Testis (tissue), 5 donors: ENCODE measurements at regions of chr14 and their contacts with region 1.

Region 1: GRCh38 chr14:59254146-59254941 is 65.9 kb downstream of the DAAM1 start:
- DNase-seq: peak; percentile 97
- H3K4me3 ChIP-seq: no peak overlapping the region
- H3K27ac ChIP-seq: peak overlapping the region; percentile 88 to 92
- H3K4me1 ChIP-seq: peaks cover 51% of the 10 kb centered on the region
- H3K27me3 ChIP-seq: no peaks in the 10 kb centered on the region
- CTCF ChIP-seq: no peak
- POLR2A ChIP-seq: no peak

Region 2: GRCh38 chr14:59215325-59216181 is 38.8 kb before region 1 on chr14:
- intact Hi-C with region 1: loop called (anchors 5 kb)
- DNase-seq: peak; percentile 81
- H3K4me3 ChIP-seq: no peak overlapping the region
- H3K27ac ChIP-seq: no peak overlapping the region
- H3K4me1 ChIP-seq: peaks cover 26% of the 10 kb centered on the region
- H3K27me3 ChIP-seq: no peaks in the 10 kb centered on the region
- CTCF ChIP-seq: no peak
- POLR2A ChIP-seq: no peak

Region 3: DNA sequence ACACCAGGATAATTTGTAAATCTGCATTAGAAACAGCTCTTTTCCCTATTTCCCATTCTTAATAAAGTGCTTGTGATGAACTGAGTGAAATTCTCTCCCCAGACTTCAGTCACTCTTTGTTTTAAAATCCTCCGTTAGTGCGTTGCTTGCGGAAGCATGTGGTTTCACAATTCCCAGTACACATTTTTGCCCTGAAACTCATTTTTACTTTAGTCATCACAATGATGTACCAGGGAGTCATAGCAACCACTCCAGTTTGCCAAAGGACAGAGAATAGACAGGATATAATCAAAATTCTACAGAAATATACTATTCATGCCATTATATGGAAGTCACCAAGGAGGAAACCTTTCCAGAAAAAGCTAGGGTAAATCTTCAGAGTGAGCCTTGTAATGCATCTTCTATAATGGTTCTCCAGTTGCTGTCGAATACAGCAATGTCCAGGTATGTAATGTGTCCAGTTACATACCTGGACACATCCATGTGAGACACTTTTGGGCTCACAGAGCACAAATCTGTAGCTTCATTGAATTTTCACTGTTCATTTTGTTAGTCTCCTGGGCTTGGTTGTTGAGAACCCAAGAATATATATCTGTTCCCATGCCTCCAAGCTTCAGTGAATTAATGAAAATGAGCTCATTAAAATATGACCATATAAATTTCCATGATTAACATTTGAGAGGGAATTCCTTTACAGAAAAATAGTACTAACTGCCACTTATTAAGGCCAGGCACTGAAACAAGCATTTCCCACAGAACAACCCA is 153.1 kb after region 1 on chr14:
- intact Hi-C with region 1: no loop called
- DNase-seq: no peak
- H3K4me3 ChIP-seq: no peak overlapping the region
- H3K27ac ChIP-seq: peak overlapping the region in 1 of 2 donors; percentile 46
- H3K4me1 ChIP-seq: peaks cover 7% of the 10 kb centered on the region
- H3K27me3 ChIP-seq: no peaks in the 10 kb centered on the region
- CTCF ChIP-seq: no peak
- POLR2A ChIP-seq: no peak